ENCODE measurements at regions of chr19 and their contacts with region 1.

Region 1: GRCh38 chr19:56333505-56333904 is 18.9 kb upstream of the ZSCAN5A start:
- DNase-seq: peak; percentile 69
- H3K4me3 ChIP-seq: no peak overlapping the region
- H3K27ac ChIP-seq: no peak overlapping the region
- H3K4me1 ChIP-seq: no peaks in the 10 kb centered on the region
- H3K27me3 ChIP-seq: peaks cover 0 to 1% of the 10 kb centered on the region in 2 experiments
- CTCF ChIP-seq: peak; percentile 48 to 66
- POLR2A ChIP-seq: no peak

Region 2: DNA sequence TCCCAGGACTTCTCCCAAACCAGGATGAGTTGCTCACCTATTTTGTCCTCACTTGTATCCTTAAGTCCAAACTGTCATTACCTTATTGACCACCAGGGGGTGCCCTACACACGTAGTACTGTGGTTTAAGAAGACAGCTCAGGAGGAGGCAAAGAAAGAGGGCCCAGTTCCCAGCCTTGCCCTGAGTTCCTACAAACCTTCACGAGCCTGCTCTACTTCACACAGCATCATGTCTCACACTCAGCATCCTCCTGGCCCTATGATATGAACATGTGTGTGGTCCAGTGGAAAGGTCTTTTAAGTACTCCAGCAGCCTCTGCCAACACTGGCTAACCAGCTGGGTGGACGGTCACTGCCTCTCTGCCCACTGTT is 701.1 kb before region 1 on chr19:
- CTCF ChIA-PET with region 1: interaction called, 26 read pairs
- POLR2A ChIA-PET with region 1: no interaction called
- dilution Hi-C with region 1: no loop called
- intact Hi-C with region 1: no loop called
- DNase-seq: peak; percentile 91
- H3K4me3 ChIP-seq: no peak overlapping the region
- H3K27ac ChIP-seq: no peak overlapping the region
- H3K4me1 ChIP-seq: peaks cover 12% of the 10 kb centered on the region
- H3K27me3 ChIP-seq: no peaks in the 10 kb centered on the region
- CTCF ChIP-seq: peak; percentile 67 to 75
- POLR2A ChIP-seq: no peak

Region 3: GRCh38 chr19:56080669-56081401 is 252.7 kb before region 1 on chr19:
- CTCF ChIA-PET with region 1: interaction called, 206 read pairs
- POLR2A ChIA-PET with region 1: no interaction called
- dilution Hi-C with region 1: no loop called
- intact Hi-C with region 1: loop called (anchors 1 kb)
- DNase-seq: peak; percentile 83
- H3K4me3 ChIP-seq: peak overlapping the region; percentile 10 to 38 (median 32)
- H3K27ac ChIP-seq: no peak overlapping the region
- H3K4me1 ChIP-seq: peaks cover 8% of the 10 kb centered on the region
- H3K27me3 ChIP-seq: peaks cover 0 to 3% of the 10 kb centered on the region in 2 experiments
- CTCF ChIP-seq: peak; percentile 58 to 81
- POLR2A ChIP-seq: no peak

Region 4: GRCh38 chr19:56170261-56170660 is 163.2 kb before region 1 on chr19:
- CTCF ChIA-PET with region 1: interaction called, 17 read pairs
- POLR2A ChIA-PET with region 1: no interaction called
- dilution Hi-C with region 1: no loop called
- intact Hi-C with region 1: loop called (anchors 1 kb)
- DNase-seq: no peak
- H3K4me3 ChIP-seq: no peak overlapping the region
- H3K27ac ChIP-seq: no peak overlapping the region
- H3K4me1 ChIP-seq: no peaks in the 10 kb centered on the region
- H3K27me3 ChIP-seq: peaks cover 0 to 2% of the 10 kb centered on the region in 2 experiments
- CTCF ChIP-seq: no peak
- POLR2A ChIP-seq: no peak

Region 5: DNA sequence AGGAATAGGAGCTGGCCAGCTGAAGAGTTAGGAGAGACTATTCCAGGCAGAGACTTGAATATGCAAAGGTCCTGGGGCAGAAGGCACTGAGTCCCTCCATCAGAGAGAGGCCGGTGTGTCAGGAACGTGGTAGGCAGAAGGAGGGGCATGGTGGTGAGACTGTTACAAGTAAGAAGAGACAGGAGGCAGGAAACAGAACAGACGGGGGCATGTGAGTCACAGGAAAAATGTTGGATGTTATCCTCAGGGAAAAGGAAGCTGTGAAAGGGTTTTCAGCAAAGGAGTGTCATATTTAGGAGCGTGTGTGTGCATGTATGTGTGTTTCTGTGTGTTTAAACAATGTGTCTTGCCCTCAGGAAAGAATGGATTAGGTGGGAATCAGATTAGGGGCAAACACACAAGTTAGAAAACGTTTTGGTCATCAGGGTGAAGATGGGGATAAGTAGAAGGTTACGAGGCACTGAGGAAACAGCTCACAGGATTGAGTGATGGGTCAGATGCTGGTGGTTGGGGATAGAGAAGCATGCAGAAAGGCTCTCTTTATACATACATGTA is 59.9 kb before region 1 on chr19:
- CTCF ChIA-PET with region 1: interaction called, 20 read pairs
- POLR2A ChIA-PET with region 1: no interaction called
- dilution Hi-C with region 1: no loop called
- intact Hi-C with region 1: no loop called
- DNase-seq: peak; percentile 80
- H3K4me3 ChIP-seq: no peak overlapping the region
- H3K27ac ChIP-seq: peak overlapping the region; percentile 64
- H3K4me1 ChIP-seq: peaks cover 27% of the 10 kb centered on the region
- H3K27me3 ChIP-seq: no peaks in the 10 kb centered on the region
- CTCF ChIP-seq: no peak
- POLR2A ChIP-seq: no peak

Region 6: GRCh38 chr19:56321989-56322440 is 11.5 kb before region 1 on chr19:
- CTCF ChIA-PET with region 1: interaction called, 12 read pairs
- POLR2A ChIA-PET with region 1: no interaction called
- dilution Hi-C with region 1: no loop called
- intact Hi-C with region 1: no loop called
- DNase-seq: no peak
- H3K4me3 ChIP-seq: no peak overlapping the region
- H3K27ac ChIP-seq: no peak overlapping the region
- H3K4me1 ChIP-seq: no peaks in the 10 kb centered on the region
- H3K27me3 ChIP-seq: no peaks in the 10 kb centered on the region
- CTCF ChIP-seq: no peak
- POLR2A ChIP-seq: no peak

Region 7: GRCh38 chr19:56383826-56384605 is 50.5 kb after region 1 on chr19:
- CTCF ChIA-PET with region 1: no interaction called
- POLR2A ChIA-PET with region 1: no interaction called
- dilution Hi-C with region 1: no loop called
- intact Hi-C with region 1: no loop called
- DNase-seq: no peak
- H3K4me3 ChIP-seq: no peak overlapping the region
- H3K27ac ChIP-seq: no peak overlapping the region
- H3K4me1 ChIP-seq: no peaks in the 10 kb centered on the region
- H3K27me3 ChIP-seq: no peaks in the 10 kb centered on the region
- CTCF ChIP-seq: no peak
- POLR2A ChIP-seq: no peak

Measured in endothelial cell of umbilical vein (primary cell).